ENCODE measurements at regions of chr6 and their contacts with region 1.

Region 1: DNA sequence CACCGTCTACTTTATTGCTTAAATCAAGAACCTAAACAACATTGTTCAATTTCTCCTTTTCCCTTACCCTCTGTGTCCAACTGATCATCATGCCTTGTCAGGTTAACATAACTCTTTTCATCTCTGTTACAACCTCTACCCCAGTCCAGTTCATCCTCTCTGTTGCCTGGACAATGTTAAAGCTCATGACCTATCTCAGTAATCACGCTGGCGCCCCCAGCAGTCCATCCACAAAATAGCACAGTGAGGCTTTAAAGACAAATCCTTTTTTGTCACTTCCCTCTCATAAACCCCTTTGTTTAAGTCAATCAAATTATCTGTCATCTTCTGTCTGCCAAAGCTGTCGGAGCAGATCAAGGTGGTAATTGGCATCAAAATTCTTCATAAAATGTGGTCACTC is 140.1 kb downstream of the QKI start:
- DNase-seq: peak; percentile 51
- H3K4me3 ChIP-seq: no peak overlapping the region
- H3K27ac ChIP-seq: no peak overlapping the region
- H3K4me1 ChIP-seq: no peaks in the 10 kb centered on the region
- H3K27me3 ChIP-seq: no peaks in the 10 kb centered on the region
- CTCF ChIP-seq: peak; percentile 29 to 48 (median 36)
- EP300 ChIP-seq: no peak
- POLR2A ChIP-seq: no peak

Region 2: GRCh38 chr6:162560891-162561290 is 993.8 kb before region 1 on chr6:
- in situ Hi-C with region 1: no loop called
- intact Hi-C with region 1: no loop called
- DNase-seq: no peak
- H3K4me3 ChIP-seq: no peak overlapping the region
- H3K27ac ChIP-seq: no peak overlapping the region
- H3K4me1 ChIP-seq: no peaks in the 10 kb centered on the region
- H3K27me3 ChIP-seq: no peaks in the 10 kb centered on the region
- CTCF ChIP-seq: no peak
- EP300 ChIP-seq: no peak
- POLR2A ChIP-seq: no peak

Region 3: GRCh38 chr6:163092876-163093275 is 461.8 kb before region 1 on chr6:
- in situ Hi-C with region 1: no loop called
- intact Hi-C with region 1: no loop called
- DNase-seq: no peak
- H3K4me3 ChIP-seq: no peak overlapping the region
- H3K27ac ChIP-seq: no peak overlapping the region
- H3K4me1 ChIP-seq: no peaks in the 10 kb centered on the region
- H3K27me3 ChIP-seq: no peaks in the 10 kb centered on the region
- CTCF ChIP-seq: no peak
- EP300 ChIP-seq: no peak
- POLR2A ChIP-seq: no peak

Region 4: GRCh38 chr6:163427498-163428254 is 127.0 kb before region 1 on chr6:
- in situ Hi-C with region 1: loop called in 1 of 4 experiments (anchors 10 kb)
- intact Hi-C with region 1: loop called (anchors 10 kb)
- DNase-seq: no peak
- H3K4me3 ChIP-seq: no peak overlapping the region
- H3K27ac ChIP-seq: no peak overlapping the region
- H3K4me1 ChIP-seq: peaks cover 9 to 59% (median 23%) of the 10 kb centered on the region in 4 donors
- H3K27me3 ChIP-seq: peaks cover 66% of the 10 kb centered on the region
- CTCF ChIP-seq: peak; percentile 20 to 34 (median 27)
- EP300 ChIP-seq: no peak
- POLR2A ChIP-seq: no peak

Measured in transverse colon (tissue), 4 donors.